ENCODE measurements at regions of chr10 and their contacts with region 1.

Region 1: DNA sequence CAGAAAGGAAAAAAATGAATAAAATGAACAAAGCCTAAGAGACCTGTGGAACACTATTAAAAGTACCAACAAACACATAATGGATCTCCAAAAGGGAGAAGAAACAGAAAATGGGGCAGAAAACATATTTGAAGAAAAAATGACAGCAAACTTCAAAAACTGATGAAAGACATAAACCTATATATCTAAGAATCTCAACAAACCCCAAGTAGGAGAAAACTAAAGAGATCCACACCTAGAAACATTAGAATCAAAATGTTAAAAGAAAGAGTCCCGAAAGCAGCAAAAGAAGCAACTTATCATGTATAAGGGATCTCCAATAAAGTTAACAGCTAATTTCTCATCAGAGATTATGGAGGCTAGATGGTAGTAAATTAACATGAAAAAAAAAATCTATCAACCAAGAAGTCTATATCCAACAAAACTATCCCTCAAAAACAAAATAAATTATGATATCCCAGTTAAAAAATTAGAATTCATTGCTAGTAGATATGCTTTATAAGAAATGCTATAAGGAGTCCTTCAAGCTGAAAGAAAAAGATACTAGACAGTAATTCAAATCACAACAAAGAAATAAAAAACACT is 68.0 kb downstream of the DNAJC1 start:
- DNase-seq: no peak
- H3K4me3 ChIP-seq: no peak overlapping the region
- H3K27ac ChIP-seq: no peak overlapping the region
- H3K4me1 ChIP-seq: no peaks in the 10 kb centered on the region
- H3K27me3 ChIP-seq: no peaks in the 10 kb centered on the region
- CTCF ChIP-seq: no peak

Region 2: DNA sequence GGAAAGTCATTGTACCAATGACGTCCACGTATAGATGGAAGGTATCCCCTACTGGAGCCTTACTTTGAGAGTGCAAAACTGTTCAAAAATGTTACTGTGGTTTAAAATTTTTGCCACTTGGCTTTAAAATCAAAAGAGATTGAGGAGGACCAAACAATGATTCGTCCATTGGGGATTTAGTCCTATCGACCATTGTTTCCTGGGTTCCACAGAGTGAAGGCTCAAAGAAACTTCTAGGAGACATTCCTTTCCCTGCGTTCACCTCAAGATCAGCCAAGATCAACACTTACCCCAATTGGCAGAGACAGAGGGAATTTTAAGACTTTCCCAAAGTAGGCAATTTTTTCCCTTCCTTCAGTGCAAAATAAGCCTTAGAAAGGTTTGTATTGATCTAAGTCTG is 1190.7 kb before region 1 on chr10:
- intact Hi-C with region 1: loop called (anchors 5 kb)
- DNase-seq: no peak
- H3K4me3 ChIP-seq: no peak overlapping the region
- H3K27ac ChIP-seq: peak overlapping the region; percentile 43 to 54
- H3K4me1 ChIP-seq: peaks cover 0 to 74% (median 16%) of the 10 kb centered on the region in 4 donors
- H3K27me3 ChIP-seq: no peaks in the 10 kb centered on the region
- CTCF ChIP-seq: no peak